HEK293 (cell line): ENCODE measurements at regions of chr4 and their contacts with region 1.

Region 1: GRCh38 chr4:3490770-3491169 is 27.7 kb downstream of the DOK7 start:
- H3K4me3 ChIP-seq: no peak overlapping the region
- H3K27ac ChIP-seq: no peak overlapping the region
- H3K4me1 ChIP-seq: no peaks in the 10 kb centered on the region
- CTCF ChIP-seq: no peak

Region 2: GRCh38 chr4:3436798-3437581 is 53.8 kb before region 1 on chr4:
- CTCF ChIA-PET with region 1: no interaction called
- POLR2A ChIA-PET with region 1: no interaction called
- H3K4me3 ChIP-seq: no peak overlapping the region
- H3K27ac ChIP-seq: no peak overlapping the region
- H3K4me1 ChIP-seq: no peaks in the 10 kb centered on the region
- CTCF ChIP-seq: no peak

Region 3: DNA sequence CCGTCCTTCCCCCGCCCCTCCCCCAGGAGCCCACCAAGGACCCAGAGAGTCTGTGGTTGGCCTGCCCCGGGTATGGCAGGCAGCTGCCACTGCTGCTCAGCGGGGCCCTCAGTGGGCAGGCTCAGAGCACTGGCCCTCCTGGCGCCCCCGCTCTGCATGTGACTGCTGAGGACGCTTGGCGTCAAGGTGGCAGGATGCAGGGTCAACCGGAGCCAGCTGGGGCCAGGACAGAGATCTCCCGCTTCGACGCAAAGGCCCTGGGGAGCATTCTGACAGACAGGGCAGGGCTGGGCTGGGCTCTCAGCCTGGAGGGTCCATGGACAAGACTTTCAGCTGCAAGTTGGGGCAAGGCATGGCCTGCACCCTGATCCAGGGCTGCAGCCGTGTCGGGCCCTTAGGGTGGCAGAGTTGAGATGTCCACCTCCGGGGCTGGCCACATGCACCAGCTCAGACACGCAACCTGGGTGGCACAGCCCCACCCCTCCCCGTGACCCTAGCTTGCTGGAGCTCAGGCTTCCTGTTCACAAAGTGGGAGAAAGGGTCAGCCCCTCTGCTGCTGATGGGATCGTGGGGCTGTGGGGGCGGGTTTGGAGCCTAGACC is 11.2 kb after region 1 on chr4:
- CTCF ChIA-PET with region 1: interaction called, 5 read pairs
- POLR2A ChIA-PET with region 1: interaction called, 10 read pairs
- H3K4me3 ChIP-seq: no peak overlapping the region
- H3K27ac ChIP-seq: no peak overlapping the region
- H3K4me1 ChIP-seq: no peaks in the 10 kb centered on the region
- CTCF ChIP-seq: no peak

Region 4: GRCh38 chr4:3765271-3766040 is 274.7 kb after region 1 on chr4:
- CTCF ChIA-PET with region 1: no interaction called
- POLR2A ChIA-PET with region 1: no interaction called
- H3K4me3 ChIP-seq: peak overlapping the region; percentile 27
- H3K27ac ChIP-seq: peak overlapping the region; percentile 53; the same call in 1 of the 2 replicates
- H3K4me1 ChIP-seq: no peaks in the 10 kb centered on the region
- CTCF ChIP-seq: no peak